Left ventricle myocardium inferior (tissue), 1 donor: ENCODE measurements at regions of chr2 and their contacts with region 1.

Region 1: DNA sequence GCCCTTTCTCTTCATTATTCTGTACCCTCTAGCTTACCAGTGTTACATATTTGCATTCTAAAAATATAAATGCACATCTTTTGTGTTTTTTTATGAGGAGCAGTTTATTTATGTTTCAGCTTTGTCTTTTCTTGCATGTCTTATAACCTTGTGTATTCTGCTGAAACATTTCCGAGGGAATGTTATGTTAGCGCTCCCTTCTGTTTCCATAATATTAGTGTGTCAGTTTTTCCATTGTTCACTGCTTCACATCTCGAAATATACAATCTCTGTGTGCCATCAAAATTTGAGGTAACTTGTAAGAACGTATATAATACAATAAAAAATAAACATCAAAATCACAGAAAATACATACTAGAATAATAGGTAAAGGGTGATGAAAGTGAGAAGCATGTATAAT is 153.3 kb downstream of the PKP4 start:
- DNase-seq: no peak
- H3K4me3 ChIP-seq: no peak overlapping the region
- H3K27ac ChIP-seq: no peak overlapping the region
- H3K4me1 ChIP-seq: no peaks in the 10 kb centered on the region
- H3K27me3 ChIP-seq: no peaks in the 10 kb centered on the region
- CTCF ChIP-seq: no peak

Region 2: DNA sequence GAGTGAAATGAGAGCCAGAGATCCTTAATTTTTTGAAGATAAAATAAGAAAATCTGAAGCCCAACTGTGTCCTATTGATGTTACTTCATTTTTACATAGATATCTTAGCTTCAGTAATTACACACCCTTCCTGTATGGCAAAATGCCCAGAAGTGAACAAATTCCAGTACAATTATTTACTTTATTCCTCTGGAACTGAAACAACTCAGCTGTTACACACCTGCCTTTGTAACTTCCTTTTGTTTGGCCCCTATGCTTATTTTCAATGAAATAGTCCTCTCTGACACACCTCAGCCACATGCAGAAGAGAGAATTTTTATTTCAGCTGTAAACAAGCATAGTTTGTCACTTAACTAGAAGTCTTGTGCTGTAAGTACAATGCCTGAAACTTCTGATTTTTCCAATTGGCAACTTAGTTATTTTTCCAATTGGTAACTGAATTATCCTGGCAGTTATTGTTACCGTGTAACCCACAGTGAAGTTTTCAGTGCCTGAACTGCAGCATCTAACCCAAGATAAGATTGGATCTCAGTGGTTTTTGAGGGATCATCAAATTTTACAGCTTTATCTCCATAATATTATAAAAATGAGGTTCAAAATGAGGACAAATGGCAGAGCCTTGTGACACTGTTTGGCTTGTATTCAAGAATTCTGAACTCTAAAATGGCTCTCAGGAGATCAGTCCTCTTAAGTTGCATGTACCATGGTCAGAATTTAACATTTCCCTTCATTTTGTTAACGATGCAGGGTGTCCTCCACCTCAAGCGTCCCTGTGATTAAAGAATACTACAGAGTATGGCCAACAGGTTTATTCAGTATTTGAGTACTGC is 70.7 kb before region 1 on chr2:
- intact Hi-C with region 1: loop called (anchors 5 kb)
- DNase-seq: no peak
- H3K4me3 ChIP-seq: no peak overlapping the region
- H3K27ac ChIP-seq: peak overlapping the region; percentile 60
- H3K4me1 ChIP-seq: peaks cover 34% of the 10 kb centered on the region
- H3K27me3 ChIP-seq: no peaks in the 10 kb centered on the region
- CTCF ChIP-seq: no peak